ENCODE measurements at regions of chr22 and their contacts with region 1.

Region 1: GRCh38 chr22:40044102-40044869 is 49.5 kb downstream of the FAM83F start:
- DNase-seq: peak; percentile 93 to 98 (median 98)
- H3K4me3 ChIP-seq: peak overlapping the region; percentile 50 to 98 (median 82)
- H3K27ac ChIP-seq: peak overlapping the region; percentile 80 to 100 (median 98)
- H3K27me3 ChIP-seq: peaks cover 0 to 22% (median 0%) of the 10 kb centered on the region in 45 donors
- CTCF ChIP-seq: peak in 7 of 56 donors; percentile 6 to 30 (median 13)

Region 2: DNA sequence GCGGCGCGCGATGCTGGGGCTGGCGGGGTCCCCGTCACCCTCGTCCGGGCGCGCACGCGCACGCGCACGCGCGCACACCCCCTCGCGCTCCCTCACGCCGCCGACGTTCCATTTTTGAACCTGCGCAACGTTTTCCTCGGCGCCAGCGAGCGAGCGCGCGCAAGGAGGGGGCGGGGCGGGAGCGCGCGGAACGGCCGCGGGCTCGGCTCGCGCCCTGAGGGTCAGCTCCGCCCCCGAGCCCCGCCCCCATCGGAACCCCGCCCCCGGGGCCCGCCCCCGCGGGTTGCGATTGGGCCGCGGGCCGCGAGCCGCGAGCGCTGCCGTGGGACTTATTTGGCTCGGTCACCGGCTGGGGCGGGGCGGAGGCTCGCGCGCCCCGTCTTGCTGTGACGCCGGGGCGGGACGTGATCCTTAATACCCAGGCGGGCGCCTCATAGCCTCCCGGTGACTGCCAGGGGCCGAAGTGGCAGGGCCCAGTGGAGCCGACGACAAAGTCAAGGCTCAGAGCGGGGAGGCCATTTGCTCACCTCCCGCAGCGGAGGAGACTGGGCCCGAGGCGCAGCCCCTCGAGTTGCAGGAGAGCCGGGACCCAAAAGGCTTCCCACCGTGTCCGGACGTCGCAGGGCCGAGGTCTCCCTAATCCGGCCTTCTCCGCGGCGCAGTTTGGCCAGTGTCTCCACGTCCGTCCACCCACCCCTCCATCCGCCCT is 891.6 kb before region 1 on chr22 and contains the start of gene CBX7:
- intact Hi-C with region 1: loop called in 1 of 2 experiments (anchors 10 kb)
- DNase-seq: peak; percentile 92 to 96 (median 94)
- H3K4me3 ChIP-seq: peak within 1 kb of the TSS; percentile 71 to 99 (median 96)
- H3K27ac ChIP-seq: peak within 1 kb of the TSS; percentile 92 to 100 (median 99)
- H3K27me3 ChIP-seq: no peaks in the 10 kb centered on the region
- CTCF ChIP-seq: peak in 17 of 56 donors; percentile 7 to 43 (median 21)
- total RNA-seq, gene CBX7: 112 to 229 (median 170) TPM

Region 3: GRCh38 chr22:40177738-40178416 is 133.6 kb after region 1 on chr22 and contains the start of gene TNRC6B:
- intact Hi-C with region 1: loop called (anchors 1 to 5 kb)
- DNase-seq: peak in 9 of 10 donors; percentile 61 to 91 (median 74)
- H3K4me3 ChIP-seq: peak within 1 kb of the TSS; percentile 41 to 97 (median 73)
- H3K27ac ChIP-seq: peak within 1 kb of the TSS; percentile 22 to 96 (median 87)
- H3K27me3 ChIP-seq: no peaks in the 10 kb centered on the region
- CTCF ChIP-seq: peak in 28 of 56 donors; percentile 8 to 58 (median 28)
- total RNA-seq, gene TNRC6B: 79.1 to 136 (median 104) TPM

Measured in dorsolateral prefrontal cortex (tissue), 120 donors.